Activated naive CD4-positive, alpha-beta T cell treated with anti-CD3 and anti-CD28 coated beads, Interleukin-2, amount 10 ng/mL, durations not matched to agents 7 days and 5 days (primary cell): ENCODE measurements at regions of chr10 and their contacts with region 1.

Region 1: DNA sequence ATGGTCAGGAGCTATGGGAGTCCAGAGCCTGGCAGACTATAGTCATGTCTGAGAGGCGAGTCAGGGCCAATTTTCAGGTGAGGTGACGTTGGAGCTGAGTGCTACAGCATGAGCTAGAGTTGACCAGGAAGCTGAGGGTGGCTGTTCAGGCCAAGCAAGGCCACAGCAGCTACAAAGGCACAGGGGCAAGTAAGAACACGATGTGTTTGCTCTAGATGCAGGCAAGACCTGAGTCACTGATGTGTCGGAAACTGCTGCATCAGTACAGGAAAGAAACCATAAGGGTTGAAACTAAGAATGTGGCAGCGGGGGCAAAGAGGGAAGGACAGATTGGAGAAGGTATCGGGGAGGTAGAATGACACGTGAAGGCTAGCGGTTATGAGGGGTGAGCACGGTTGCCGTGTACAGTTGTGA is 11.8 kb upstream of the RRP12 start:
- DNase-seq: peak; percentile 48
- H3K4me3 Mint-ChIP-seq: no peak overlapping the region
- H3K27ac Mint-ChIP-seq: peak overlapping the region; percentile 50
- H3K4me1 Mint-ChIP-seq: peaks cover 49% of the 10 kb centered on the region
- H3K27me3 Mint-ChIP-seq: no peaks in the 10 kb centered on the region

Region 2: DNA sequence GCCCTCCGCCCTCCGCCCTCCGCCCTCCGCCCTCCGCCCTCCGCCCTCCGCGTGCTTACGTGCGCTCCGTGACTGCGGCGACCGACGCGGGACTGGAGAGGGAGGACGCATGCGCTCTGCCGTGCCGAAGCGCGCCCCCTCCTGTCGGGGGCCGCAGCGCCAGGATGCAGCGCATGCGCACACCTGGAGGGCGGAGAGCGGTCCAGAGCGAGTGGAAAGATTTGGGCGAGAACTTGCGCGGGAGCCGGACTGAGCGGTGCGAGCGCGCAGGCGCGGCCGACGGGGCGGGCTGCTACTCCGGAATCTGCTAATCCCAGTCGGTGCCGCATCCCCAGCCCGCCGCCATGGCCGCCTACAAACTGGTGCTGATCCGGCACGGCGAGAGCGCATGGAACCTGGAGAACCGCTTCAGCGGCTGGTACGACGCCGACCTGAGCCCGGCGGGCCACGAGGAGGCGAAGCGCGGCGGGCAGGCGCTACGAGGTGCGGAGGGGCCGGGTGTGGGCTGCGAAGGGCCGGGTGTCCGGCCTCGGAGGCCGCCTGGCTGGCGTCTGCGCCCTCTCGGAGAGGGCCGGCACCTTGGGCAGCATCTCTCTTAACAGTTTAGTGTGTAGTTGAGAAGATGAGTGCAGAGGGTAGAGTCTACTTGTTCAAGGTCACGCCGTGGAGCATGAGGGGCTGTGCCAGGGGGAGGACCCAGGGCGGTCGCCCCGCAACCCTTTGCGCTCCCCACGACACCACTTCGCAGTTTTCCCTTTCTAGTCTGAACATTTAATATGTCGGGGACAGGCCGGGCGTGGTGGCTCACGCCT is 13.3 kb after region 1 on chr10 and contains the start of gene PGAM1:
- CTCF ChIA-PET with region 1: interaction called, 60 read pairs
- DNase-seq: peak; percentile 95
- H3K4me3 Mint-ChIP-seq: peak within 1 kb of the TSS; percentile 88
- H3K27ac Mint-ChIP-seq: peak within 1 kb of the TSS; percentile 94
- H3K4me1 Mint-ChIP-seq: peaks cover 54% of the 10 kb centered on the region
- H3K27me3 Mint-ChIP-seq: peaks cover 3% of the 10 kb centered on the region